ENCODE measurements at regions of chr16 and their contacts with region 1.

Region 1: DNA sequence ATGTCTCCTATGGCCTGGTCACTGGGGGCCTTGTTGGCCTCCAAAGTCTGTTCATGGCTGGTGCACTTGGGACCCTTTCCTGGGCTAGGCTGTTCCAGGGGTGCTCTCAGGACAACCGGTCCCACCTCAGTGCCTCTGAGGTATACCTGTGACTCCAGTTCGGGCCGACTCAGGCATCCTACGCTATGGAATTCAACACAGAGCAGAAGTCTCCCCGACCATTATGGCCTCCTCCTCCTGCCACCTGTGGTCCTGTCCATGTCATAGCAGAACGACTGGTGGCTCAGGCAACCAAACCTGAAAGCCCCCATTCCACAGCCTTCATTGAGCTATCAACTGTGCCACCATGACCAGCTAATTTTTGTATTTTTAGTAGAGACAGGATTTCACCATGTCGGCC is 8.5 kb upstream of the PSMD7 start:
- DNase-seq: no peak
- H3K4me3 ChIP-seq: no peak overlapping the region
- H3K27ac ChIP-seq: no peak overlapping the region
- H3K4me1 ChIP-seq: no peaks in the 10 kb centered on the region
- H3K27me3 ChIP-seq: no peaks in the 10 kb centered on the region
- CTCF ChIP-seq: no peak
- EP300 ChIP-seq: no peak
- POLR2A ChIP-seq: no peak

Region 2: DNA sequence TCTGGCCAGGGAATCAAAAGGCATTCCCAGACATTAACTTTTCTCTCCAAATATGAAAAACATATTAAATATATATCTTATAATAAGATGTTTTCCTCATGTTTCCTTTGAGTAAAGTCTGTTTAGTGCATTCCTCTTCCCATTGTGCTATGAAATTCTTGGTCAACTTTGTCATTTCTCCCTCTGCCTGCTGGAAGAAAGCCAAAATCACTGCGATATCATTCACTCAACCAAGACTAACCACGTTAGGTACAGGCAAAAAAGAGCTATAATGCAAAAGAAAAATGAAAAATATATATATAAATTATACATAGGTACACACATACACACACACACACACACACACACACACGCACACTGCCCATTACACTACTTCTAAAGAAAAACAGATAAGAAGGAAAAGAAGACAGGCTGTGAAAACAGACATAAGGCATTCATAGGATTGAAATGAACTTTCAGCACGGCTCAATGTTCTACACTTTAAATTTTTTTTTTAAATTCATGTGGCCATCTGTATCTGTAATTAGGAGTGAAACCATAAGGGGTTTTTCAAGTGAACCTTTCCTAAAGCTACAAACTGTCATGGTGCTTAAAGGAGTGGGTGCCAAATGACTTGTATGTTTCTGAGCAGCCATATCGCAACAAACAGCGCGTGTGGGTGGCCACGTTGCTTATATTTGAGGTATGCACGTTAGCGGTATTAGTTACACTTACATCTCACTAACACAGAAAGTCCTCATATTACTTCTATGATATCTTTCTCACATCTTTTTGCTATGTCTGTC is 63.0 kb before region 1 on chr16:
- intact Hi-C with region 1: no loop called
- DNase-seq: no peak
- H3K4me3 ChIP-seq: no peak overlapping the region
- H3K27ac ChIP-seq: no peak overlapping the region
- H3K4me1 ChIP-seq: no peaks in the 10 kb centered on the region
- H3K27me3 ChIP-seq: no peaks in the 10 kb centered on the region
- CTCF ChIP-seq: no peak
- EP300 ChIP-seq: no peak
- POLR2A ChIP-seq: no peak

Region 3: DNA sequence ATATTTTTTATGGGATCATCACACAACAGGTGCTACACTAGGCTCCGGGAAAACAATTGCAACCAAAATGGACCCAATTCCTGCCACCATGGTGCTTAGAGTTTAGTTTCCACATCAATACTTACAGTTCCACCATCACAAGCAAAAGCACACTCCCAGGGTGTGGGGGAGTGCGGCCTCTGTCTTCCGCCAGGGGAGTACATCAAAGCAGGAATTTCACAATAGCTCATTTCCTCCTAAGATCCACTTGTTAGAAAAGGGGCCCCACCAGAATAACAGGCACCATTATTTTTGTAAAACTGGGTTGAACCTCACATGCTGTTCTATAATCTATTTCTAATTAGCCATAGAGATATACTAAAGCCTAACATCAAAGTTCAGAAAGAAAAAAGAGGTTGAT is 35.7 kb before region 1 on chr16:
- intact Hi-C with region 1: loop called in 1 of 4 experiments (anchors 1 kb)
- DNase-seq: no peak
- H3K4me3 ChIP-seq: no peak overlapping the region
- H3K27ac ChIP-seq: no peak overlapping the region
- H3K4me1 ChIP-seq: no peaks in the 10 kb centered on the region
- H3K27me3 ChIP-seq: no peaks in the 10 kb centered on the region
- CTCF ChIP-seq: no peak
- EP300 ChIP-seq: no peak
- POLR2A ChIP-seq: no peak

Region 4: GRCh38 chr16:74325641-74326040 is 37.6 kb after region 1 on chr16:
- intact Hi-C with region 1: no loop called
- DNase-seq: no peak
- H3K4me3 ChIP-seq: no peak overlapping the region
- H3K27ac ChIP-seq: no peak overlapping the region
- H3K4me1 ChIP-seq: no peaks in the 10 kb centered on the region
- H3K27me3 ChIP-seq: no peaks in the 10 kb centered on the region
- CTCF ChIP-seq: no peak
- EP300 ChIP-seq: no peak
- POLR2A ChIP-seq: no peak

Measured in ovary (tissue), 10 donors.